ENCODE measurements at regions of chr11 and their contacts with region 1.

Region 1: GRCh38 chr11:118689851-118690552 is 10.6 kb upstream of the TREH start:
- DNase-seq: peak; percentile 89 to 92 (median 91)
- H3K4me3 ChIP-seq: peak overlapping the region in 6 of 7 experiments; percentile 57 to 80 (median 70)
- H3K27ac ChIP-seq: no peak overlapping the region
- H3K4me1 ChIP-seq: peaks cover 0 to 36% (median 26%) of the 10 kb centered on the region in 4 experiments
- H3K27me3 ChIP-seq: no peaks in the 10 kb centered on the region

Region 2: DNA sequence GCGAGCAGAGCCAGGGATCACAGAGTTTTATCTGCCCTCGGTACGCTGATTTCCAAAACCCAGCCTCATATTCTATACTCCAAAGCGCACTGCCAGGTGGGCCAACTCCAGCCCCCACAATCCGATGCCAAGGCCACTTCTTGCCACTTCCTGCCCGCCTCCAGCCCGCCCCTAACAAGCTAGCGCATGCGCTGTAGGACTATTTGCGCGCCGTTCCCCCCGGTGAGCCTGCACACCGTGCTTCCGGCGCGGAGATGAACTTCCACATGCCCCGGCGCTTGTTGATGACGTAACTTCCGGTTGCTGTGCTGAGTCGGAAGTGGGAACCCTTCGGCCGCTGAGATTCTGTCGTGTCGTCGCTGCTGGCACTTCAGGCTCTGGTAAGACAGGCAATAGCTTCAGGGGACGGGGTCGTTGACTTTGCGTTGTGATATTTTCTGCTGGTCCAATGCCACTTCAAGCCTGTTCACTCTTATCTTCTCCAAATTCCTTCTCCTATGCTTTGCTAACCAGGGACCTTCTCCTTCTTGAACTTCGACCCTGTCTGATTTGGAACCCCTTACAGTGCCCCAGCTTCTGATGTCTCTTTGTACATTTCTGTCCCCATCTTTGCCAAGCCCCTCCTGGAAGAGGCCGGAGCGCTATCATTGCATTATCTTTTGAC is 330.6 kb before region 1 on chr11 and contains the start of gene UBE4A:
- CTCF ChIA-PET with region 1: no interaction called
- POLR2A ChIA-PET with region 1: no interaction called
- DNase-seq: peak; percentile 96 to 98 (median 96)
- H3K4me3 ChIP-seq: peak within 1 kb of the TSS; percentile 60 to 100 (median 97)
- H3K27ac ChIP-seq: peak within 1 kb of the TSS; percentile 71 to 84
- H3K4me1 ChIP-seq: peaks cover 5 to 15% (median 14%) of the 10 kb centered on the region in 4 experiments
- H3K27me3 ChIP-seq: no peaks in the 10 kb centered on the region

Region 3: GRCh38 chr11:118705111-118705741 is 15.2 kb after region 1 on chr11:
- CTCF ChIA-PET with region 1: interaction called, 34 read pairs
- POLR2A ChIA-PET with region 1: interaction called, 3 read pairs
- DNase-seq: peak; percentile 56 to 84 (median 74)
- H3K4me3 ChIP-seq: peak overlapping the region in 3 of 7 experiments; percentile 11 to 45 (median 16)
- H3K27ac ChIP-seq: no peak overlapping the region
- H3K4me1 ChIP-seq: peaks cover 0 to 34% (median 29%) of the 10 kb centered on the region in 4 experiments
- H3K27me3 ChIP-seq: peaks cover 0 to 1% (median 0%) of the 10 kb centered on the region in 5 experiments

Region 4: GRCh38 chr11:118749429-118749828 is 59.4 kb after region 1 on chr11:
- CTCF ChIA-PET with region 1: interaction called, 22 read pairs
- POLR2A ChIA-PET with region 1: no interaction called
- DNase-seq: no peak
- H3K4me3 ChIP-seq: no peak overlapping the region
- H3K27ac ChIP-seq: no peak overlapping the region
- H3K4me1 ChIP-seq: no peaks in the 10 kb centered on the region
- H3K27me3 ChIP-seq: no peaks in the 10 kb centered on the region

Region 5: DNA sequence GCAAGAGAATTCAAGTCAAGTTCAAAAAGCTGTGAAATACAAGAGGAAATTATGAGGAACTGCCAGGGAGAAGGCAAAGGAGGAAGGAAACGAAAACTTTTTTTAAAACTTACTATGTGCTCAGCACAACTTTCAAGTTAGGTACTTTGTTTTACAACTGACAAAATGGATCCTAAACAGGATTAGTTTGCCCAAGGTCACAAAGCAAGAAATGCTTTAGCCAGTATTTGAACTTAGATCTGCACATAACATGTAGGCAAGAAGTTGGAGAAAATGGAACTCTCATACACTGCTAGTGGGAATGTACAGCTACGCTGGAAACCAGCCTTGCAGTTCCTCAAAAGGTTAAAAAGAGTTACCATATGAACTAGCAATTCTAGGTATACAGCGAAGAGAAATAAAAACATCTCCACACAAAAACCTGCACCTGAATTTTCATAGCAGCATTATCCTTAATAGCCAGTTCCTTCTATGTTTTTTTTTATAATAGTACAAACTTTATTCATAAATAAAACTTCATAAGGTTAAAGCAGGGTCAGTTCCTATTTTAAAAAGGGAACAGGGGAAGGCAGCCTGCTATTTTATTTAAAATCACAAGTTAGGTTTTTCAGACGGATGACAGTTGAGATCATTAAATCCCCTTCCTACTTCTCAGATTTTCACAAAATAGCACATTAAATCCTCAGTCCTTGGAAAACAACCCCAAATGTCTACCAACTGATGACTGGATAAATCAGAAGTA is 81.7 kb after region 1 on chr11:
- CTCF ChIA-PET with region 1: interaction called, 16 read pairs
- POLR2A ChIA-PET with region 1: interaction called, 3 read pairs
- DNase-seq: peak in 2 of 3 donors; percentile 26 to 41
- H3K4me3 ChIP-seq: peak overlapping the region in 3 of 7 experiments; percentile 1 to 39 (median 34)
- H3K27ac ChIP-seq: peak overlapping the region in 1 of 2 experiments; percentile 47
- H3K4me1 ChIP-seq: peaks cover 8 to 25% (median 18%) of the 10 kb centered on the region in 4 experiments
- H3K27me3 ChIP-seq: no peaks in the 10 kb centered on the region

Region 6: DNA sequence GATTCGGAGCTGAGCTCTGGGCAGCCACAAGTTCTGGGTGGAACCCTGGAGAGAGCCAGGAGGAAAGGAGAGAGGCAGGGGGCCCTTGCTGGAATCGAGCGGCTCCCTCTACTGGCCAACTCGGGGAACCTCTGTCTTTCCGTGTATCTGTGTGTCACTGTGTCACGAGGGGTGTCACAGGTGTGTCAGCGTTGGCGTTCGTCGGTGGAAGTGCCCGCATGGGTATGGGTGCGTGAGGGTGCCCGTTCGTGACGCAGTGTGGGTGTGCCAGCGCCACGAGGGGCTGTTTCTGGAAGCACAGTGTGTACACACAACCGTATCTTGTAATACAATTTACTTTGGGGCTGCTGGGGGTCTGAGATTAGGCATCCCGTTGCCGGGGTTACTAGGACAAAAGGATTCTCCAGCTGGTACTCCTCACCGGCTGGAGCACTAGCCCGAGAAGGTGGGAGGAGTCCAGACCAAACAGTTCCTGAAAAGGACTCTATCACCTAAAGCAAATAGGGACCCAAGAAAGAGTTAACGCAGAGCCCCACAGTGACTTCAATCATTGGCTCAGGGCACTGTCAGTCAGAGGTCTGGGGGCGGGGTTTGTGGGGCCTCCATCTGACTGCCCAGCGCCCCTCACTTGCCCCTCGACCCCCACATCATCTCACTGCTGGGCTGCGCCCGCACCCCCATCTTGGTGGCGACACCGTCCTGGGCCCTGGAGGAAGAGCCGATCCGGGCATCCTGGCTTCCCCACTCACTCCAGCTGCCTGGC is 238.3 kb after region 1 on chr11:
- CTCF ChIA-PET with region 1: interaction called, 13 read pairs
- POLR2A ChIA-PET with region 1: no interaction called
- DNase-seq: peak; percentile 92 to 95 (median 94)
- H3K4me3 ChIP-seq: peak overlapping the region; percentile 66 to 93 (median 82)
- H3K27ac ChIP-seq: peak overlapping the region; percentile 76 to 93
- H3K4me1 ChIP-seq: peaks cover 5 to 75% (median 51%) of the 10 kb centered on the region in 4 experiments
- H3K27me3 ChIP-seq: no peaks in the 10 kb centered on the region